AG04450 (cell line): ENCODE measurements at regions of chr21 and their contacts with region 1.

Region 1: GRCh38 chr21:44949779-44950198 is 10.0 kb downstream of the SLX9 start:
- DNase-seq: no peak
- H3K4me3 ChIP-seq: no peak overlapping the region
- H3K27ac ChIP-seq: no peak overlapping the region
- H3K27me3 ChIP-seq: no peaks in the 10 kb centered on the region
- CTCF ChIP-seq: peak; percentile 92

Region 2: GRCh38 chr21:44939532-44940115 is 10.2 kb before region 1 on chr21 and contains the start of gene SLX9:
- CTCF ChIA-PET with region 1: interaction called, 12 read pairs
- POLR2A ChIA-PET with region 1: no interaction called
- DNase-seq: peak; percentile 47
- H3K4me3 ChIP-seq: peak within 1 kb of the TSS; percentile 96
- H3K27ac ChIP-seq: peak within 1 kb of the TSS; percentile 47
- H3K27me3 ChIP-seq: peaks cover 8% of the 10 kb centered on the region
- CTCF ChIP-seq: no peak
- polyA plus RNA-seq, gene SLX9: 11.4 and 11.9 TPM in 2 replicates

Region 3: GRCh38 chr21:44982558-44983244 is 32.9 kb after region 1 on chr21:
- CTCF ChIA-PET with region 1: no interaction called
- POLR2A ChIA-PET with region 1: no interaction called
- DNase-seq: no peak
- H3K4me3 ChIP-seq: no peak overlapping the region
- H3K27ac ChIP-seq: no peak overlapping the region
- H3K27me3 ChIP-seq: peaks cover 10% of the 10 kb centered on the region
- CTCF ChIP-seq: no peak

Region 4: DNA sequence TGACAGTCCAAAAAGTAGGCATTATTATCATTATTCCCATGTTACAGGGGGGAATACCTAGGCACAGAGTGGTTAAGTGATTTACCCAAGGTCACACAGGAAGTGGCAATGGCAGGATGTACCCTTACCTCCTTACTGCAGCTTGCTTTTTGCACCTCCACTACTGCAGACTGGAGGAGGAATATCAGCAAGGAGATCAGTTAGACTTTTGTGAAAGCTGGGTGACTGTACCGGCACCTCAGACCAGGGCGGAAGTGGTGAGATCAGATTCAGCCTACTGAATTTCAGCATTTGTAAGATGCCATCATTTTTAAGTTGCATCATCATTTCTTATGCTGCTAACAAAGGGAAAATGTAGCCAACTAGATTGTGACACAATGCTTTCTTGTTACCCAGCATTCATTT is 129.1 kb after region 1 on chr21:
- CTCF ChIA-PET with region 1: interaction called, 12 read pairs
- POLR2A ChIA-PET with region 1: interaction called, 4 read pairs
- DNase-seq: peak; percentile 18
- H3K4me3 ChIP-seq: no peak overlapping the region
- H3K27ac ChIP-seq: no peak overlapping the region
- H3K27me3 ChIP-seq: no peaks in the 10 kb centered on the region
- CTCF ChIP-seq: no peak

Region 5: GRCh38 chr21:45114072-45114471 is 164.3 kb after region 1 on chr21:
- CTCF ChIA-PET with region 1: interaction called, 12 read pairs
- POLR2A ChIA-PET with region 1: no interaction called
- DNase-seq: no peak
- H3K4me3 ChIP-seq: no peak overlapping the region
- H3K27ac ChIP-seq: no peak overlapping the region
- H3K27me3 ChIP-seq: no peaks in the 10 kb centered on the region
- CTCF ChIP-seq: no peak

Region 6: DNA sequence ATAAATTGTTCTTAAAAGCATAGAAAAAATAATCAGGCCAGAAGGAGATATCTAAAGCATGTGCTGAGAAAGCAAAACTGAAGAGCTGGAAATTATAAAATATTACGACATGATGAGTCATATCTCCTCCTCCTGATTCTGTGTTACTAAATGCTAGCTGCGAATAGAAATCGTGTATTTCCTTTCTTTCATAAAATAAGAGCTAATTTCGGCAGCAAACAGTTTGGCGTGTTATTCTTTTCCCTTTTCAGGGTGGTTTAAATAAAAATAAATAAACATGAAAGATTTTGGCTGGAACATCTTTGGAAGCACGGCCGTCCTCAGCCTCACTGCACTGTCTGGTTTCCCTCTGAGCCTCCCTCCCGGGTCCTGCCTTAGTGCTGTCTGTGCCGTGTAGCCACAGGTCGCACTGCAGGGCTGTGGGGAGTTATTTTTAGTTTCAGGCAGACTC is 180.6 kb after region 1 on chr21:
- CTCF ChIA-PET with region 1: interaction called, 63 read pairs
- POLR2A ChIA-PET with region 1: interaction called, 5 read pairs
- DNase-seq: no peak
- H3K4me3 ChIP-seq: peak overlapping the region; percentile 55
- H3K27ac ChIP-seq: peak overlapping the region; percentile 71
- H3K27me3 ChIP-seq: no peaks in the 10 kb centered on the region
- CTCF ChIP-seq: no peak